K562 (cell line): ENCODE measurements at regions of chr17 and their contacts with region 1.

Region 1: DNA sequence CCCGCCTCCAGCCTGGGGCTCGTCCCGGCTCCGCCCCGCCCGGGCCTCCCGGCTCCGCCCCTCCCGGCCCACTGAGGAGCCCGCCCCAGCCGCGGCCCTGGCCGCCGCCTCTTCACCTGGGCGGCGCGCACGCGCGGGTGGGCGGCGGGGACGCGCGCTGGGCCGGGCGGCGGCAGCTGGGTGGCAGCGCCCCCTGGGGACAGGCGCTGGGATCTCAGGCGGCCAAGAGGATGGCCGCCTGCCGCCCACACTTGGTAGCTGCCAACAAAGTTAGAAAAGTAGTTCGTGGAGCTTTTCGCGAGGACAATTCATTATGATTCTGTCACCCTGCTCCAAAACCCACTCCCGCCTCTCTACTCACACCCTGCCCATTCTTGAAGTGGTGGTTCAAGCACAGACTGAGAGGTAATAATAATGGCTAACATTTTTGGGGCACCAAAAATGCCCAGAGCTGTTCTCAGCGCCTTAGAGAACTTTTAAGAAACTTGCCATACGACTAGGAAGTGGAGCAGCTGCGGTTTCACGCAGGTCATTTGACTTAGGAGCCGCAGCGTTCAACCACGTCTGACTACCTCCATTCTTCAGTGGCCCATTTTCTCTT is 340 bp upstream of the MYO1D start:
- DNase-seq: peak; percentile 94 to 99 (median 97)
- ATAC-seq: peak; percentile 97
- H3K4me3 ChIP-seq: peak overlapping the region; percentile 95
- H3K27ac ChIP-seq: peak overlapping the region; percentile 88
- H3K4me1 ChIP-seq: peaks cover 13 to 23% of the 10 kb centered on the region in 2 experiments
- H3K27me3 ChIP-seq: no peaks in the 10 kb centered on the region
- CTCF ChIP-seq: peak; percentile 83 to 98 (median 98)
- EP300 ChIP-seq: no peak
- POLR2A ChIP-seq: no peak
- RAD21 ChIP-seq: peak; percentile 82 to 96

Region 2: DNA sequence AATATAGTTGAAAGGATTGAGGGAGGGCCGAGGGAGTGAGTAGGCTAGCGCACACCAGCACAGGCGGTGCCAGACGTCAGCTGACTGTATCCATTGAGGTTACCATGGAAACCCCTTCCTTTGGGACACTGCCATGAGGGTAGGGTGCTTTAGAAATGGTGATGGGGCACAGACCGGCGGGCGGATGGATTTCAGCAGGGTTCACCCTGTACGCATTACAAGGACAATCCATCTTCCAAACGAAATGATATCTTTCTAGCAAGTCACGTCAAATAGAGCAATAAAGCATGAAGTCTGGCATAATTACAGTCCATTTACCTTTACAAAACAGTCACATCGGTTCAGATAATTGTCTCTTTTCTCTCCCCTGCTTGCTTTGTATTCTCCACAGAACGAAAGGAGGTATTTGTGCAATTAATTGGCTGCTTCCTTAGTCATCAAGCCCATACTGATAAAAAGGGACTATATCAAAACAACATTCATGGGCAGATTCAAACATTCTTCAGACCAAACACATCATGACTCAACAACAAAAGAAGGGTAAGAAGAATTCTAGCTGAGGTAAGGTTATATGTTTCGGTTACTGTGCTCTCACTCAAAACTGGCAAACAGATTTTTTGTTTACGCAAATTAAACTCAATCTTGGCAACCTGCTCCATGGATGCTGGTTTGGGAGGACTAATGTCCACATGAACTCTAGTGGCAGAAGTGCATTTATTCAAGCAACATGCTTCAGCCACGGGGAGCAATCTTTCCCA is 249.8 kb before region 1 on chr17:
- CTCF ChIA-PET with region 1: no interaction called
- POLR2A ChIA-PET with region 1: no interaction called
- in situ Hi-C with region 1: no loop called
- intact Hi-C with region 1: no loop called
- DNase-seq: no peak
- ATAC-seq: no peak
- H3K4me3 ChIP-seq: no peak overlapping the region
- H3K27ac ChIP-seq: no peak overlapping the region
- H3K4me1 ChIP-seq: peaks cover 0 to 4% of the 10 kb centered on the region in 2 experiments; a peak in 2 of 5 replicates
- H3K27me3 ChIP-seq: no peaks in the 10 kb centered on the region
- CTCF ChIP-seq: no peak
- EP300 ChIP-seq: no peak
- POLR2A ChIP-seq: no peak
- RAD21 ChIP-seq: no peak

Region 3: DNA sequence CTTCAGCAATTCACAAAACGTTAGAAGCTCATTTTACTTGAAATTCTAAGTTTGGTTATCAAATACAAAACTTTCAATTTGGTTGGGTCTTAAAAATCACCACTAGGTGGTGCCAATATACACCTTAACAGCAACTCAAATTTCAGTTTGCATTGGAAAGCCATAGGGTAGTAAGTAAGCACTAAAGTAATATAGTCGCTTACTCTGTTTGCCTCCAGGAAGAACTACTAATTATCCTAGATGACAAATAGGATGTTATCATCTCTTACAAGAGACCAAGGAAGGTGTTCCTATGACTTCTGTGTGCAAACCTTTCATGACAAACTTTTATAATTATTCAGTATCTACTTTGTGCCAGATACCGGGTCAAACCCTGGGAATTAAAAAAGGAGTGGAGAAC is 93.7 kb before region 1 on chr17:
- CTCF ChIA-PET with region 1: interaction called, 73 read pairs
- POLR2A ChIA-PET with region 1: interaction called, 3 read pairs
- in situ Hi-C with region 1: loop called (anchors 10 kb)
- intact Hi-C with region 1: loop called (anchors 1 kb)
- DNase-seq: peak; percentile 49 to 70 (median 54)
- ATAC-seq: peak; percentile 83
- H3K4me3 ChIP-seq: no peak overlapping the region
- H3K27ac ChIP-seq: no peak overlapping the region
- H3K4me1 ChIP-seq: peaks cover 3 to 10% of the 10 kb centered on the region in 2 experiments; a peak in 3 of 5 replicates
- H3K27me3 ChIP-seq: no peaks in the 10 kb centered on the region
- CTCF ChIP-seq: peak; percentile 56 to 87 (median 73); a peak in 5 of 6 replicates
- EP300 ChIP-seq: no peak
- POLR2A ChIP-seq: no peak
- RAD21 ChIP-seq: peak; percentile 95 to 98

Region 4: GRCh38 chr17:32859857-32860525 is 17.3 kb before region 1 on chr17:
- CTCF ChIA-PET with region 1: no interaction called
- POLR2A ChIA-PET with region 1: interaction called, 51 read pairs
- in situ Hi-C with region 1: no loop called
- intact Hi-C with region 1: no loop called
- DNase-seq: peak; percentile 50 to 91 (median 66)
- ATAC-seq: peak; percentile 92
- H3K4me3 ChIP-seq: no peak overlapping the region
- H3K27ac ChIP-seq: peak overlapping the region; percentile 56
- H3K4me1 ChIP-seq: peaks cover 16 to 53% of the 10 kb centered on the region in 2 experiments
- H3K27me3 ChIP-seq: no peaks in the 10 kb centered on the region
- CTCF ChIP-seq: no peak
- EP300 ChIP-seq: peak; percentile 87
- POLR2A ChIP-seq: no peak
- RAD21 ChIP-seq: peak in 1 of 2 experiments; percentile 23; a peak in 1 of 4 replicates

Region 5: GRCh38 chr17:32896647-32897258 is 19.5 kb after region 1 on chr17:
- CTCF ChIA-PET with region 1: no interaction called
- POLR2A ChIA-PET with region 1: interaction called, 22 read pairs
- in situ Hi-C with region 1: no loop called
- intact Hi-C with region 1: no loop called
- DNase-seq: peak in 1 of 4 experiments; percentile 39
- ATAC-seq: peak; percentile 6
- H3K4me3 ChIP-seq: no peak overlapping the region
- H3K27ac ChIP-seq: peak overlapping the region; percentile 88
- H3K4me1 ChIP-seq: peaks cover 8 to 61% of the 10 kb centered on the region in 2 experiments
- H3K27me3 ChIP-seq: no peaks in the 10 kb centered on the region
- CTCF ChIP-seq: no peak
- EP300 ChIP-seq: no peak
- POLR2A ChIP-seq: no peak
- RAD21 ChIP-seq: no peak

Region 6: DNA sequence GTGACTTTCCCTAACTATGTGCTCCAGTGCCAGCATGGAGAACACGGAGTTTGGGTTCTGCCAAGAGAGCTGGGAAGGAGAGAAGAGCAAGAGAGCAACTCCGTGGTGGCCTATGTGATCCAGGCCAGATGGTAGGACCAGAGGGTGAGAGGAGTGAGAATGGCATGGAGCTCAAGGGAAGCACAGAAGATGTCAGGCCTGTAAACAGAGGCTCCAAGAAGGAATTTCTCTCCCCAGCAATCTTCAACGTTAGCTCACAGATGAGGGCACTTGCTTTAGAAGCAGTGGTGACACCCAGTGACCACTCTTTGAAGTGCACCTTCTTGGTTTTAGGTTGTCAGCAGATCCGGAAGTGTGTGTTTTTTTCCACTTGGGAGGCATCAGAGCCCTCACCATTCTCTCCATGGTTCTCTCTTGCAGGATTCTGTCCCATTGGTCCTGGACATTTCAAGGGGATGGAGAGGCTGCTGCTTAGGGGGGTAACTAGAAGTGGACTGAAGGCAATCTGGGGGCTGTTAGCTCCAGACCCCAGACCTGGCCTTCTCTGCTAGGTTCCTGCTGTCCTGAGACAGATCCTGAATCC is 32.6 kb after region 1 on chr17:
- CTCF ChIA-PET with region 1: no interaction called
- POLR2A ChIA-PET with region 1: interaction called, 23 read pairs
- in situ Hi-C with region 1: no loop called
- intact Hi-C with region 1: loop called (anchors 1 kb)
- DNase-seq: peak; percentile 74 to 94 (median 78)
- ATAC-seq: peak; percentile 77
- H3K4me3 ChIP-seq: no peak overlapping the region
- H3K27ac ChIP-seq: peak overlapping the region; percentile 73
- H3K4me1 ChIP-seq: peaks cover 10 to 48% of the 10 kb centered on the region in 2 experiments; a peak in 4 of 5 replicates
- H3K27me3 ChIP-seq: no peaks in the 10 kb centered on the region
- CTCF ChIP-seq: peak; percentile 91 to 95 (median 91)
- EP300 ChIP-seq: no peak
- POLR2A ChIP-seq: no peak
- RAD21 ChIP-seq: peak; percentile 82 to 95

Region 7: GRCh38 chr17:32936894-32937500 is 59.7 kb after region 1 on chr17:
- CTCF ChIA-PET with region 1: no interaction called
- POLR2A ChIA-PET with region 1: interaction called, 3 read pairs
- in situ Hi-C with region 1: no loop called
- intact Hi-C with region 1: loop called (anchors 2 kb)
- DNase-seq: peak; percentile 77 to 84 (median 80)
- ATAC-seq: peak; percentile 94
- H3K4me3 ChIP-seq: no peak overlapping the region
- H3K27ac ChIP-seq: 0 out of 3 replicates have a peak overlapping the region, but pooled peaks have one; percentile 16
- H3K4me1 ChIP-seq: peaks cover 6 to 8% of the 10 kb centered on the region in 2 experiments; a peak in 4 of 5 replicates
- H3K27me3 ChIP-seq: no peaks in the 10 kb centered on the region
- CTCF ChIP-seq: peak; percentile 85 to 91 (median 91)
- EP300 ChIP-seq: no peak
- POLR2A ChIP-seq: no peak
- RAD21 ChIP-seq: peak; percentile 70 to 86